Heart left ventricle (tissue), 16 donors: ENCODE measurements at regions of chr6 and their contacts with region 1.

Region 1: DNA sequence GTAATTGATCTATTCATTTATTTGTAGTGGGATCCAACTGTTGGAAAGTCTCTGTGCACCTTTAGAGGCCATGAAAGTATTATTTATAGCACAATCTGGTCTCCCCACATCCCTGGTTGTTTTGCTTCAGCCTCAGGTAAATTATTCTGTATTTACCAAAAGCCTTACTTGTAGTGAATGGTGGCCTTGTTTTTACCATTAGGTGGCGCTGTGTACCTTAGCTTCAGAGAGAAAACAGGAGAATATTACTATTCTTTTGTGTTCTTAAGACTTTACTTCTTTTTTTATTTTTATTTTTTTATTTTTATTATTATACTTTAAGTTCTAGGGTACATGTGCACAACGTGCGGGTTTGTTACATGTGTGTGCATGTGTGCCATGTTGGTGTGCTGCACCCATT is 23.7 kb downstream of the PEX7 start:
- DNase-seq: peak in 1 of 5 donors; percentile 25
- ATAC-seq: peak in 2 of 4 donors; percentile 55
- H3K4me3 ChIP-seq: no peak overlapping the region
- H3K27ac ChIP-seq: no peak overlapping the region
- H3K4me1 ChIP-seq: peaks cover 0 to 12% (median 0%) of the 10 kb centered on the region in 12 donors
- H3K27me3 ChIP-seq: no peaks in the 10 kb centered on the region
- CTCF ChIP-seq: peak; percentile 60 to 83 (median 72)
- POLR2A ChIP-seq: no peak

Region 2: GRCh38 chr6:136967876-136968752 is 122.1 kb after region 1 on chr6:
- intact Hi-C with region 1: loop called in 2 of 10 experiments (anchors 5 to 10 kb)
- DNase-seq: peak; percentile 49 to 77 (median 65)
- ATAC-seq: peak in 3 of 4 donors; percentile 71 to 76 (median 74)
- H3K4me3 ChIP-seq: no peak overlapping the region
- H3K27ac ChIP-seq: peak overlapping the region in 6 of 12 donors; percentile 37 to 79 (median 59)
- H3K4me1 ChIP-seq: peaks cover 0 to 19% (median 2%) of the 10 kb centered on the region in 12 donors
- H3K27me3 ChIP-seq: peaks cover 0 to 5% (median 0%) of the 10 kb centered on the region in 9 donors
- CTCF ChIP-seq: peak; percentile 46 to 71 (median 60)
- POLR2A ChIP-seq: no peak

Region 3: GRCh38 chr6:137094411-137095008 is 248.5 kb after region 1 on chr6:
- intact Hi-C with region 1: no loop called
- DNase-seq: peak in 4 of 5 donors; percentile 39 to 61 (median 42)
- ATAC-seq: peak; percentile 32 to 80 (median 76)
- H3K4me3 ChIP-seq: no peak overlapping the region
- H3K27ac ChIP-seq: no peak overlapping the region
- H3K4me1 ChIP-seq: peaks cover 0 to 10% (median 2%) of the 10 kb centered on the region in 12 donors
- H3K27me3 ChIP-seq: no peaks in the 10 kb centered on the region
- CTCF ChIP-seq: peak; percentile 68 to 92 (median 80)
- POLR2A ChIP-seq: no peak